ENCODE measurements at regions of chr16 and their contacts with region 1.

Region 1: DNA sequence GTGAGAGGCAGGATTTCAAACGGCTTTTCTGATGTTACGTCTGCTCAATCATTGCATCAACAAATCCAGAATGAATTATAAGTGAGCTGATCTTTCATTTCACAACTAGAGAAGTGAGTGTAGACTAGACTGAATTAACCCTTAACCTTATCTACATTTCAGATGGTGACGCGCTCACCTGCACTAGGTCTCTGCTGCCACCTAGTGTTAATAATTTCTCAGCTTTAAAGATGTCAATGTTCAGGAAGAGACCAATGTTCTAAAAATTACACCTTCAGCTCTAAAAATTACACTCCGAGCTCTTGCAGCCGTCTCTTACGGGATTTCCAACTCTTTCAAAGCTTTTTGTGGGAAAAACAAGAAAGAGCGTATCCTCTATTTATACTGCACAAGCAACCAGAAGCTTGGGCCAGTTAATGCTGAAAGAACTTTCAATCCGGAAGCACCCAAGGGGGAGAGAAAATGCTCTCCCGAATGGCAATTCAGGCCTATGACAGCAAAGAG is 88.2 kb upstream of the FA2H start:
- DNase-seq: peak; percentile 27
- H3K4me3 Mint-ChIP-seq: no peak overlapping the region
- H3K27ac Mint-ChIP-seq: no peak overlapping the region
- H3K4me1 Mint-ChIP-seq: peaks cover 9% of the 10 kb centered on the region
- H3K27me3 Mint-ChIP-seq: no peaks in the 10 kb centered on the region

Region 2: DNA sequence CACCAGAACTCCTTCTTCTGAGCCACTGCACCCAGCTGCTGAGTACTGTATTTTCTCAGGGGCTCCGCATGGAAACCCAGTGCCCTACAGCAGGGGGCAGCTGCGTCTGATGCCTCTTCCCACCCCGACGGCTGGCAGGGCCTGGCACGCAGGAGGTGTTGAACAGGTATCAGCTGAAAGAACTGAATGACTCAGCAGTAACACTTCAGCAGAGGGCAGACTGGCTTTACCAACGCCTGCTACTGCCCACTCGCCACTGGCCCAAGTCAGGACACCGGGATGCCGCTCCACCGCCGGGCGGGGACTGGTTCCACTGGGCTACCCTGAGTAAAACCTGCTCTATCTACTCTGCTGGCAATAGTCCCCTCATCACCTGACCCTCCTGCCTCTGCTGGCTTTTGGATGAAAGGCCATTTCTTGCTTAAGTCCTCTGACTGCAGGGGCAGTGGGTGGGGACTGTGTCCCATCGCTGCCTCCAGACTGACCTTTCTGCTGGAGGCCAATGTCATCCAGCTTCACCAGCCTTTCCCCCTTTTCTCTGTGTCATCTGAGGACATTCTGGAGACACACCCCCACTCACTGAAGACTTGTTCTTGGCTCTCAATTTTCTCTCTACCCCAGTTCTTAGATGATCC is 12.2 kb after region 1 on chr16:
- CTCF ChIA-PET with region 1: interaction called, 14 read pairs
- POLR2A ChIA-PET with region 1: no interaction called
- DNase-seq: no peak
- H3K4me3 Mint-ChIP-seq: no peak overlapping the region
- H3K27ac Mint-ChIP-seq: peak overlapping the region; percentile 80
- H3K4me1 Mint-ChIP-seq: peaks cover 21% of the 10 kb centered on the region
- H3K27me3 Mint-ChIP-seq: no peaks in the 10 kb centered on the region

Region 3: GRCh38 chr16:74973153-74973703 is 110.4 kb after region 1 on chr16:
- CTCF ChIA-PET with region 1: no interaction called
- POLR2A ChIA-PET with region 1: no interaction called
- DNase-seq: no peak
- H3K4me3 Mint-ChIP-seq: no peak overlapping the region
- H3K27ac Mint-ChIP-seq: no peak overlapping the region
- H3K4me1 Mint-ChIP-seq: peaks cover 2% of the 10 kb centered on the region
- H3K27me3 Mint-ChIP-seq: no peaks in the 10 kb centered on the region

Measured in activated CD4-positive, alpha-beta T cell treated with anti-CD3 and anti-CD28 coated beads, Interleukin-2, amount 10 ng/mL, durations not matched to agents 7 days and 5 days (primary cell).